ENCODE measurements at regions of chr18 and their contacts with region 1.

Region 1: GRCh38 chr18:9925369-9925768 is 11.6 kb downstream of the VAPA start:
- DNase-seq: no peak
- H3K4me3 ChIP-seq: no peak overlapping the region
- H3K27ac ChIP-seq: peak overlapping the region in 3 of 4 donors; percentile 4 to 24 (median 5)
- H3K4me1 ChIP-seq: peaks cover 44 to 90% (median 67%) of the 10 kb centered on the region in 4 donors
- H3K27me3 ChIP-seq: no peaks in the 10 kb centered on the region
- CTCF ChIP-seq: no peak
- EP300 ChIP-seq: no peak
- POLR2A ChIP-seq: no peak

Region 2: DNA sequence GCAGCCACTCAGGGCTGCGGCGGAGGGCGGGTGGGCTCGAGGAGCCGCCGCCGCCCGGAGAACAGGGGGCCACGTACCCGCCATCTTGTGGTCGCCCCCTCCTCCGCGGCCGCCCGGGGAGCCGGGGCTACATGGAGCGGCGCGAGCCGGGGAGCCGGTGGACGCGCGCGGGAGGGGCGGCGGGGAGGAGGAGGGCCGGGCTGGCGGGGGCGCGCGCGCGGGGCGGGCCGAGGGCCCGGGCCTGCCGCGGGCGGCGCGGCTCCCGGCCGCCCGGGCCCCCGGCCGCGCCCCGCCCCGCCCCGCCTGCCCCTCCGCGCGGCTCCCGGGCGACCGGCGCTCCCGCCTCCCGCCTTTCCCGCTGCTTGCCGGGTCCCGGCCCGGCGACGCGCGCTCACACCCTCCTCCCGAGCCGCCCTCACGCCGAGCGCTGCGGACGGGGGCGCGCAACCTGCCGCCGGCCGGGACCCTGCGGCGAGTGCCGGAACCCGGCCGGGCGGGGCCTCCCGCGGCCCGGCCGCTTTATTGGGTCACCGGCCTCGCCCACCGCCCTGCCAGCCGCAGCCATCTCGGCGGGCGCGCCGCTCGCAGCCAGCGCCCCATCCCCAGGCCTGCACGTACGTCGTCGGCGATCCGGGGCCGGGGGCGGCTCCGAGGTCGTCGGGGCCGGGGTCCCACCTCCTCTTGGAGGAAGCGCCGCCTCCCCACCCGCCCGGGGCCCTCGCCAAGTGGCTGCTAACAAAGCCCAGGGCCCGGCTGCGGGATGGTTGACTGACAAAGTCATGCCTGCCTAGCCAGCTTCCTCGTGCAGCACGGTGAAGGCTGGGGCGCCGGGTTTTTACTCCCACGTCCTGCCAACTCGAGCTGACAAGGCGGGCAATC is 310.7 kb before region 1 on chr18 and contains the start of gene PPP4R1:
- in situ Hi-C with region 1: loop called in 2 of 4 experiments (anchors 25 kb)
- intact Hi-C with region 1: no loop called
- DNase-seq: peak; percentile 81
- H3K4me3 ChIP-seq: peak within 1 kb of the TSS; percentile 35 to 96 (median 90)
- H3K27ac ChIP-seq: peak within 1 kb of the TSS; percentile 94 to 98 (median 98)
- H3K4me1 ChIP-seq: peaks cover 3 to 29% (median 19%) of the 10 kb centered on the region in 4 donors
- H3K27me3 ChIP-seq: no peaks in the 10 kb centered on the region
- CTCF ChIP-seq: no peak
- EP300 ChIP-seq: no peak
- POLR2A ChIP-seq: no peak
- total RNA-seq, gene PPP4R1: 46.0 to 163 (median 79.2) TPM